ENCODE measurements at regions of chr5 and their contacts with region 1.

Region 1: DNA sequence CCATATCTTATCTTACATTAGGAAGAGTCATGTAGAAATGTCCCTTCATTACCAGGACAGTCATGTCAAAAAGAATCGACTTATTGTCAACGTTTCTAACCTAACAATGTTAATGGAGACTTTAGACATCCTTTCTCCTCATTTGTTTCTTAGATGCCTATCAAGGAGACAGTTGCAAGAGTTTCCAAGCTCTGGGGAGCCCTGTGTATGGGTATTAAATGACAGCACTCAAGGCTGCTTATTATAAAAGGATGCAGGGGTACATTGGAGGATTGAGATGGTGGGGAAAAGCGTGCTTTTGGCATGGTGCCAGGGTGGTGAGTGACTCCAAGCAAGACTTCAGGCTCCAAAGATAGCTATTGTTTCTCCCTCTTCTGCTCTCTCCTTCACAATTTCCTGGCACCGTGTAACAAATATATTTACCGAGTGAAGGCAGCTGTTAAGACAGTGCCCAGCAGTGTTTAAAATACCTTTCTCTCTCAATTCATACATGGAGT is 461.3 kb upstream of the CLINT1 start:
- DNase-seq: no peak
- ATAC-seq: no peak

Region 2: DNA sequence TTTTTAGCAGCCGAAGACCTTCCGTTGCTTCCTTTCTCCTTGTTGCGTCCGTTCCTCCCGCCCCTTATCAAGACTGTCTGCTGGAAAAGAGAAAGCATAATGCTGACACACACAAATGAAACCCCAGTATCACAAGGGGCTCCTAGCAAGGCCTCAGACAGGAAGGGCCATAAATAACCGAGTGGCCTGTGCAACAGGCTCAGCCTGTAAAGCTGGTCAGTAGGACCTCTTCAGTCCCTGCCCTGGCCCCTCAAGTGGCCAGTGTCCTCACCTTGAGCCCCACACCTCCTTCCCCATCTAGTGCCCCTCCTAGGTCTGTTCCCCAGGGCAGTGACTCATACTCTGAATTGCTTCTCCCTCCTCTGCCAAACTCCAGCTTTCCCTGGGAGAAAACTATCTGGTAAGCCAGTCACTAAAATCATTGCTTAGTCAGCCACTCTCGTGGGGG is 1184.7 kb after region 1 on chr5:
- intact Hi-C with region 1: loop called (anchors 5 kb)
- DNase-seq: no peak
- ATAC-seq: peak; percentile 88